CD8-positive, alpha-beta T cell (primary cell): ENCODE measurements at regions of chr1 and their contacts with region 1.

Region 1: DNA sequence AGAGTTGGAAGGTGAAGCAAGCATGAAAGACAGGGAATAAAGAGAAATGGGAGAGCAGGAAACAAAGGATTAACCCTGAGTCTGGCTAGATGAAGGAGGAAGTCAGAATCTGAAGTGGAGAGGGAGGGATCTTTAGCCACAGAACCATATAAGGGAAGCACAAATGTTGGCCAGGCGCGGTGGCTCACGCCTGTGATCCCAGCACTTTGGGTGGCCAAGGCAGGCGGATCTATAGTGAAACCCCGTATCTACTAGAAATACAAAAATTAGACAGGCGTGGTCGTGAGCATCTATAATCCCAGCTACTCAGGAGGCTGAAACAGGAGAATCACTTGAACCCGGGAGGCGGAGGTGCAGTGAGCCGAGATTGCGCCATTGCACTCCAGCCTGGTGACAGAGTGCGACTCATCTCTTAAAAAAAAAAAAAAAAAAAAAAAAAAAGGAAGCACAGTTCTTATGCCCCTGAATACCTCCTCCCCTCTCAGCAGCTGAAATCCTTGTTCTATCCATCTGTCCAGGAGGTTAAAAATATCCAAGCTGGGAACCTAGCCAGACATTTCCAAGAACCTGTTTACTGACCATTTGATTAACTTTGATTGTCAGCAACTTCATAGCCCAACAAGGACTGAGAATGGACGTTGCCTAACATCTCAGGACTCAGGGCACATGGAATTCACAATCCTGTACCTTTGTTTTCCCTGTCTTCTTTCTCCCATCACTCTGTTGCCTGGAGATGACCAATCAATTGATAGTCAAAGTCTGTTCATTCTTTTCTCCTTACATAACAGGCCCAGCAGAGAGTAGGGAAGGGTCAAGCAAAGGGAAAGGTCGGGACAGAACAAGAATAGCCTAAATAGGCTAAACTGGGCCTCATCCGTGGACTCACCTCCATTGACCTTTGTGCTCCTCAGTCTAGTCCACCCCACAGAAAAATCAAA is 10.6 kb downstream of the TXNIP start:
- DNase-seq: peak in 1 of 9 experiments; percentile 26
- ATAC-seq: no peak
- H3K4me3 ChIP-seq: peak overlapping the region in 1 of 2 experiments; percentile 8
- H3K4me3 Mint-ChIP-seq: peak overlapping the region; percentile 5
- H3K27ac ChIP-seq: peak overlapping the region in 1 of 2 experiments; percentile 34
- H3K27ac Mint-ChIP-seq: peak overlapping the region; percentile 91
- H3K4me1 ChIP-seq: peaks cover 76% of the 10 kb centered on the region
- H3K4me1 Mint-ChIP-seq: peaks cover 61% of the 10 kb centered on the region
- H3K27me3 ChIP-seq: no peaks in the 10 kb centered on the region
- H3K27me3 Mint-ChIP-seq: no peaks in the 10 kb centered on the region
- CTCF ChIP-seq: no peak

Region 2: DNA sequence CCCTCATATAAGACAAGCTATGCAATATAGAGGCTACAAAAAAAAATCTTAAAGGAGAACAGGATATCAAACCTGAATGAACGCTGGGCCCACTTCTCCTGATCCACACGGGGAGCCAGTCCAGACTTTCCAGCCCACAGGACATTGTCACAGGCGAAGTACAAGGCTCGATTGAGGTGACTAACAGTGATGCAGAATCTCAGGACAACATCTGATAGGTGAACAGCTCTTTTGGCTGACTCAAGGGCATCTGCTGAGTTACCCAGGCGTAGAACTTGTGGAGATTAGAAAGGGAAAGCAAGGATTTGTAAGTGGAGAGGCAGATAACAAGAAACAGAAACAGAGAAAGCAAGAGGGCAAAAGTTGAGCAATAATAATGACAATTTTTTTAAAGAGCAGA is 69.0 kb before region 1 on chr1:
- CTCF ChIA-PET with region 1: no interaction called
- POLR2A ChIA-PET with region 1: no interaction called
- intact Hi-C with region 1: no loop called
- DNase-seq: no peak
- ATAC-seq: no peak
- H3K4me3 ChIP-seq: no peak overlapping the region
- H3K4me3 Mint-ChIP-seq: peak overlapping the region; percentile 74
- H3K27ac ChIP-seq: no peak overlapping the region
- H3K27ac Mint-ChIP-seq: no peak overlapping the region
- H3K4me1 ChIP-seq: peaks cover 24% of the 10 kb centered on the region
- H3K4me1 Mint-ChIP-seq: peaks cover 44% of the 10 kb centered on the region
- H3K27me3 ChIP-seq: no peaks in the 10 kb centered on the region
- H3K27me3 Mint-ChIP-seq: no peaks in the 10 kb centered on the region
- CTCF ChIP-seq: no peak

Region 3: GRCh38 chr1:146007506-146008133 is 21.8 kb after region 1 on chr1:
- CTCF ChIA-PET with region 1: interaction called, 386 read pairs
- POLR2A ChIA-PET with region 1: interaction called, 41 read pairs
- intact Hi-C with region 1: no loop called
- DNase-seq: peak in 1 of 9 experiments; percentile 39
- ATAC-seq: no peak
- H3K4me3 ChIP-seq: no peak overlapping the region
- H3K4me3 Mint-ChIP-seq: peak overlapping the region; percentile 82
- H3K27ac ChIP-seq: peak overlapping the region; percentile 46 to 59
- H3K27ac Mint-ChIP-seq: peak overlapping the region; percentile 92
- H3K4me1 ChIP-seq: peaks cover 27% of the 10 kb centered on the region
- H3K4me1 Mint-ChIP-seq: peaks cover 34% of the 10 kb centered on the region
- H3K27me3 ChIP-seq: no peaks in the 10 kb centered on the region
- H3K27me3 Mint-ChIP-seq: no peaks in the 10 kb centered on the region
- CTCF ChIP-seq: no peak